Transverse colon (tissue), 4 donors: ENCODE measurements at regions of chr10 and their contacts with region 1.

Region 1: GRCh38 chr10:119006451-119007210 is 22.9 kb upstream of the NANOS1 start:
- DNase-seq: peak; percentile 61
- H3K4me3 ChIP-seq: no peak overlapping the region
- H3K27ac ChIP-seq: peak overlapping the region in 3 of 4 donors; percentile 49 to 78 (median 59)
- H3K4me1 ChIP-seq: peaks cover 4 to 13% (median 10%) of the 10 kb centered on the region in 4 donors
- H3K27me3 ChIP-seq: no peaks in the 10 kb centered on the region
- CTCF ChIP-seq: no peak
- EP300 ChIP-seq: no peak
- POLR2A ChIP-seq: no peak

Region 2: DNA sequence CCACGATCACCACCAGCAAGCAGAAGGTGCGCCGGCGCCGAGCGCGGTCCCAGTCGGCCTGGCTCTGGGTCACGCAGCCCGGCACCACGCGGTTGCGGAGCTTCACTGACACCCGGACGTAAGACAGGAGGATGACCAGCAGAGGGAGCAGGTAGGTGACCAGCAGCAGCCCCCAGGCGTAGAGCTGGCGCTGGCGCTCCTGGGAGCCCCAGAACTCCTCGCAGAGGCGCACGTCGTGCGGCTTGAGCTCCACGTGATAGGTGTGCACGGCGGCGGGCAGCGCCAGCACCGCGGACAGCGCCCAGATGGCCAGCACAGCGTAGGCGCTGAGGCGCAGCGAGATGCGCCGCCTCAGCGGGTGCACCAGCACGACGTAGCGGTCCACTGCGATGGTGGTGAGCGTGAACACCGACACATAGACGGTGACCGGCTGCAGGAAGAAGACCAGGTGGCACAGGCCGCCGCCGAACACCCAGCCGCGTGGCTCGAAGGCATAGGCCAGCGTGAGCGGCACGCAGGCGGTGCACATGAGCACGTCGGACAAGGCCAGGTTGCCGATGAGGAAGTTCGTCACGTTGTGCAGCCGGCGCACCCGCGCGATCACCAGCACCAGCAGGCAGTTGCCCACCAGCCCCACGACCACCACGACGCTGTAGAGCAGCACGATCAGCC is 412.1 kb before region 1 on chr10:
- in situ Hi-C with region 1: loop called in 1 of 4 experiments (anchors 25 kb)
- intact Hi-C with region 1: no loop called
- DNase-seq: no peak
- H3K4me3 ChIP-seq: no peak overlapping the region
- H3K27ac ChIP-seq: no peak overlapping the region
- H3K4me1 ChIP-seq: peaks cover 0 to 7% (median 0%) of the 10 kb centered on the region in 4 donors
- H3K27me3 ChIP-seq: peaks cover 66% of the 10 kb centered on the region
- CTCF ChIP-seq: peak in 2 of 5 experiments; percentile 16 to 20
- EP300 ChIP-seq: no peak
- POLR2A ChIP-seq: no peak